SK-N-SH (cell line): ENCODE measurements at regions of chr9 and their contacts with region 1.

Region 1: DNA sequence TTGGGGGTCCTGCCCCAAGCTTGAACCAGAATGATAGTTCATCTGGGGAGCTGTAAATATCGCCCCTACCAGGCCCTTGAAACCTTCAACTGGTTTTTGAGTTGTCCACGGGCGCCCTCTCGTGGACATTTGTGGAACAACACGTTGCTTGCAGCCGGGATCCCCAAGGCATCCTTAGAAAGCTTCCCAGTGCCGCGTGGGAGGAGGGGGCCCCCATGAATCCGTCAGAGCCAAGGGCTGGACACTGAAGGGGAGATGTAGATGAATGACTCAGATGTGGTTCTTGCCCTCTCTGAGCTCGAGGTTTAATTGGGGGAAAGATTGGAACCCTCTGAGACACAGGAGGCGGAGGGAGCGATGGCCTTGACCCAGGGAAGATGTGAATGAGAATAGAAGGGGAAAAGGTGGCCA is 31.8 kb upstream of the ORM1 start:
- DNase-seq: peak; percentile 81
- H3K4me3 ChIP-seq: peak overlapping the region in 1 of 2 experiments; percentile 42; a peak in 1 of 4 replicates
- H3K27ac ChIP-seq: no peak overlapping the region
- H3K4me1 ChIP-seq: peaks cover 12 to 17% of the 10 kb centered on the region in 2 experiments; a peak in 2 of 4 replicates
- H3K27me3 ChIP-seq: no peaks in the 10 kb centered on the region
- CTCF ChIP-seq: peak; percentile 88
- EP300 ChIP-seq: no peak
- RAD21 ChIP-seq: peak; percentile 92

Region 2: GRCh38 chr9:114072184-114073140 is 218.6 kb before region 1 on chr9:
- CTCF ChIA-PET with region 1: interaction called, 34 read pairs
- POLR2A ChIA-PET with region 1: no interaction called
- DNase-seq: no peak
- H3K4me3 ChIP-seq: no peak overlapping the region
- H3K27ac ChIP-seq: no peak overlapping the region
- H3K4me1 ChIP-seq: no peaks in the 10 kb centered on the region
- H3K27me3 ChIP-seq: peaks cover 7% of the 10 kb centered on the region; the same call in 1 of the 2 replicates
- CTCF ChIP-seq: no peak
- EP300 ChIP-seq: no peak
- RAD21 ChIP-seq: peak; percentile 31

Region 3: GRCh38 chr9:114098016-114098935 is 192.8 kb before region 1 on chr9:
- CTCF ChIA-PET with region 1: interaction called, 59 read pairs
- POLR2A ChIA-PET with region 1: no interaction called
- DNase-seq: peak; percentile 93
- H3K4me3 ChIP-seq: peak overlapping the region; percentile 35 to 46; a peak in 3 of 4 replicates
- H3K27ac ChIP-seq: no peak overlapping the region
- H3K4me1 ChIP-seq: peaks cover 0 to 9% of the 10 kb centered on the region in 2 experiments; a peak in 1 of 4 replicates
- H3K27me3 ChIP-seq: peaks cover 8% of the 10 kb centered on the region; the same call in 1 of the 2 replicates
- CTCF ChIP-seq: no peak
- EP300 ChIP-seq: no peak
- RAD21 ChIP-seq: no peak

Region 4: DNA sequence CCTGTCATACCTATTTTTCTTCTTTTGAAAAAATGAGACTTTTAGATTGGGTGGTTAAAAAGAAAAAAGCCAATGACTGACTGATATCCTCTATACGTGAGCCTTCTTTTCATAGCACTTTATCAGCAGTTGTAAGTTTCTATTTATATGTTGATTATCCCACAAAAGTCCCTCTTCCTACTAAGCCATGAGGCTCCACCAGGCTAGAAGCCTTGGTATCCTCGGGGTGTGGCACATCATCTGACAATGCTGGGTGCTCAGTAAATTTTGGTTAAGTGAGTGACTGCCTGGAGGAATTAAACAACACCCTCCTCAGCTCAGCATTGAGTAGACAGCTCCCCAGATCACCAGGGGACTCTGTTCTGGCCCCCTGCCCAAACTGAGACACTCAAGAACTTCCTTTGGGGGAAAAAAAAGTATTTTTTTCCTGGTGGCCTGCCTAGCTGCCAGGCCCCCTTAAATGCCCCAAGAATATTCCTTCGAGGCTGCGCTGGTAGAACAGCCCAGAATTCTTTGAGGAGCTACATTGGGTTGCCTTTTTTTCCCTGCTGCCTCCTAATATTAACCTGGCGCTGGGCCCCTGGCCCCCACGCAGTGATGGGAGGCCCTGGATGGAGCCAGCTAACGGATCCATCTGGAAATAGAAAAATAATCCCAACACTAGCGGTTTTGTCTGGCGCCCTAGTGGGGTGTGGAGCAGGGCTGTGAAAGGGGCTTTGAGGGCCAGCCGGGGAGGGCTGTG is 159.1 kb before region 1 on chr9:
- CTCF ChIA-PET with region 1: interaction called, 11 read pairs
- POLR2A ChIA-PET with region 1: no interaction called
- DNase-seq: no peak
- H3K4me3 ChIP-seq: no peak overlapping the region
- H3K27ac ChIP-seq: no peak overlapping the region
- H3K4me1 ChIP-seq: no peaks in the 10 kb centered on the region
- H3K27me3 ChIP-seq: peaks cover 23% of the 10 kb centered on the region
- CTCF ChIP-seq: no peak
- EP300 ChIP-seq: no peak
- RAD21 ChIP-seq: no peak

Region 5: GRCh38 chr9:114205171-114206015 is 85.7 kb before region 1 on chr9:
- CTCF ChIA-PET with region 1: interaction called, 14 read pairs
- POLR2A ChIA-PET with region 1: no interaction called
- DNase-seq: no peak
- H3K4me3 ChIP-seq: no peak overlapping the region
- H3K27ac ChIP-seq: no peak overlapping the region
- H3K4me1 ChIP-seq: peaks cover 0 to 4% of the 10 kb centered on the region in 2 experiments; a peak in 2 of 4 replicates
- H3K27me3 ChIP-seq: no peaks in the 10 kb centered on the region
- CTCF ChIP-seq: no peak
- EP300 ChIP-seq: no peak
- RAD21 ChIP-seq: no peak

Region 6: DNA sequence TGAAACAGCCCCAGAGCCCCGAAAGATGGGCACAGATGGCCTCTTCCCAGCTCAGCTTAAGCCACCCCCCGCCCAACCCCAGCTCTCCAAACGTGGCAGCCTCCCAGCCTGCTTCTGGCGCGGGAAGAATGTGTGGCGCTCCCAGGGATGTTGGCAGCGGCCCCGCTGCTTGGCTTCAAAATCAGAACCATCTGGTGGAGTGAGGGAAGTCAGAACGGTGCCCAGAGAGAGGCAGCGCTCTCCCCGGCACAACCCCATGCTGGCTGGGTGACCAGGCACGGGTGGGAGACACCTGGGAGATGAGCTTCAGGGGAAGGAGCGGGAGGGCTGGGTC is 40.9 kb before region 1 on chr9:
- CTCF ChIA-PET with region 1: interaction called, 52 read pairs
- POLR2A ChIA-PET with region 1: no interaction called
- DNase-seq: peak; percentile 88
- H3K4me3 ChIP-seq: no peak overlapping the region; a peak in 1 of 4 replicates
- H3K27ac ChIP-seq: peak overlapping the region; percentile 72 to 79
- H3K4me1 ChIP-seq: peaks cover 10 to 22% of the 10 kb centered on the region in 2 experiments
- H3K27me3 ChIP-seq: no peaks in the 10 kb centered on the region
- CTCF ChIP-seq: no peak
- EP300 ChIP-seq: peak; percentile 47 to 66; a peak in 2 of 4 replicates
- RAD21 ChIP-seq: no peak; the same call in 1 of the 2 replicates

Region 7: GRCh38 chr9:114314881-114315722 is 24.0 kb after region 1 on chr9:
- CTCF ChIA-PET with region 1: interaction called, 10 read pairs
- POLR2A ChIA-PET with region 1: no interaction called
- DNase-seq: no peak
- H3K4me3 ChIP-seq: no peak overlapping the region
- H3K27ac ChIP-seq: no peak overlapping the region
- H3K4me1 ChIP-seq: peaks cover 0 to 3% of the 10 kb centered on the region in 2 experiments; a peak in 1 of 4 replicates
- H3K27me3 ChIP-seq: no peaks in the 10 kb centered on the region
- CTCF ChIP-seq: no peak
- EP300 ChIP-seq: no peak
- RAD21 ChIP-seq: no peak